ENCODE measurements at regions of chr22 and their contacts with region 1.

Region 1: GRCh38 chr22:45429981-45430775 is 16.7 kb downstream of the RIBC2 start:
- DNase-seq: no peak
- H3K4me3 ChIP-seq: no peak overlapping the region
- H3K27ac ChIP-seq: no peak overlapping the region
- H3K4me1 ChIP-seq: no peaks in the 10 kb centered on the region
- H3K27me3 ChIP-seq: no peaks in the 10 kb centered on the region
- CTCF ChIP-seq: no peak

Region 2: DNA sequence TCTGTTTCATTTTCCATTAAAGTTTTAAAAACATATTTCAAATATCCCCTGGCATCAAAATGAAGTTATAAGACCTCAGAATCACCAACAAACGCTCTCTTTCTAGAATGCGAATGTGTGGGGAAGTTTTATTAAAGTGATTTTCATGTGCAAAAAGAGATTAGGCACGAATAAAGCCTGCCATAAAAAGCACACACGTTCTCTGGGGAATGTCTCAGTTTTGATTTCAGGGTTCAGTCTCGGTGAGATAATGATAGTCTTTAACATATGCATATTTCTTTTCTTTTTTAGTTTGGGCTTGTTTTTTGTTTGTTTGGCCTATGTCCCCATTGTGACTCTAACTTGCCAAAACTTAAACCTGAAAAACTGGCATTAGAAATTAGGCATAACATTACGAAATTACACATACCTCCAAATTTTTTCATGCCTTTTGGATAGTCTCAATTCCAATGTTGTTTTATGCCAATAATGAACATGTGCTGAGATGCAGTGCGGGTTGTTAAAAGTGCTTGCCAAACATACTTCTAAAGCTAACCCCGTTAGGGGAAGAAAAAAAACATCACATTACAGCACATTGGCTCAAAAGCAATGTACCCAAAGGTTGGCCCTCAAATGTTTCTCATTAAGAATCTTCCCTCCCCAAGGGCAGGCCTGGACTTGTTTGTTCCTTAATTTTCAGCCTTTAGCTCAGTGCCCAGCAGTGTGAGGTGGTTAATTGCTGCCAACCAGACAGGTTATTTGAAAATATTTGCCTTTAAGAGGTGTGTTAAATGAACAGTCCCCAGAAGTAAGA is 39.3 kb after region 1 on chr22:
- CTCF ChIA-PET with region 1: no interaction called
- dilution Hi-C with region 1: loop called (anchors 5 kb)
- in situ Hi-C with region 1: no loop called
- intact Hi-C with region 1: no loop called
- DNase-seq: peak; percentile 78
- H3K4me3 ChIP-seq: peak overlapping the region in 2 of 3 experiments; percentile 1 to 16
- H3K27ac ChIP-seq: peak overlapping the region; percentile 77
- H3K4me1 ChIP-seq: peaks cover 20% of the 10 kb centered on the region
- H3K27me3 ChIP-seq: no peaks in the 10 kb centered on the region
- CTCF ChIP-seq: no peak

Region 3: DNA sequence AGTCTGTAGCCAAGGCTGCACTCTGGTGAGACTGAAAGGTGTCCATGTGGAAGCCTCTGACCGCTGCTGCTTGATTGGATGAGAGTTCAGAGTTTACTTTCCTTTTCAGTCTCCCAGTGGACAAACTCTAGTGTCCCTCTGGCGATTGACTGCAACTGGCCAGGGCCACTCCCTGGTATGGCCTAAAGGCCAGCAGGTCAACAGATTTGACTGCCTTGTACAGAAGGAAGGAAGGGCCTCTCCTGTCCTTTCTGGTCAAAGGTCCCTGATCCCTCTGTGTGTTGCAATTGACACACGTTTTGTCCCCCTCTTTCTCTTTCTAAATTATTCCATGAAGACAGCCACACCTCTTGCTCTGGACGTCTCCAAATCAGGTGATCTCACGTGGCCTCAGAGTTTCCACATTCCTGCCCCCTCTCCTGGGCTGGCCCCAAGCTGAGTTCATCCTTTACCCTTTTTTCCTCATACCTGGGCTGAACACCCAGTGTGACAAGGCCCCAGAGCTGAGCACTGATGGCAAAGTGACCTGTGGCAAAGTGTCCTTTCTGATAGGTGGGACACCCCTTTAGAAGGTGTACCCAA is 53.8 kb after region 1 on chr22:
- CTCF ChIA-PET with region 1: no interaction called
- dilution Hi-C with region 1: no loop called
- in situ Hi-C with region 1: no loop called
- intact Hi-C with region 1: no loop called
- DNase-seq: no peak
- H3K4me3 ChIP-seq: no peak overlapping the region
- H3K27ac ChIP-seq: no peak overlapping the region
- H3K4me1 ChIP-seq: no peaks in the 10 kb centered on the region
- H3K27me3 ChIP-seq: no peaks in the 10 kb centered on the region
- CTCF ChIP-seq: no peak

Measured in mammary epithelial cell (primary cell).